Right cardiac atrium (tissue), 5 donors: ENCODE measurements at regions of chr1 and their contacts with region 1.

Region 1: DNA sequence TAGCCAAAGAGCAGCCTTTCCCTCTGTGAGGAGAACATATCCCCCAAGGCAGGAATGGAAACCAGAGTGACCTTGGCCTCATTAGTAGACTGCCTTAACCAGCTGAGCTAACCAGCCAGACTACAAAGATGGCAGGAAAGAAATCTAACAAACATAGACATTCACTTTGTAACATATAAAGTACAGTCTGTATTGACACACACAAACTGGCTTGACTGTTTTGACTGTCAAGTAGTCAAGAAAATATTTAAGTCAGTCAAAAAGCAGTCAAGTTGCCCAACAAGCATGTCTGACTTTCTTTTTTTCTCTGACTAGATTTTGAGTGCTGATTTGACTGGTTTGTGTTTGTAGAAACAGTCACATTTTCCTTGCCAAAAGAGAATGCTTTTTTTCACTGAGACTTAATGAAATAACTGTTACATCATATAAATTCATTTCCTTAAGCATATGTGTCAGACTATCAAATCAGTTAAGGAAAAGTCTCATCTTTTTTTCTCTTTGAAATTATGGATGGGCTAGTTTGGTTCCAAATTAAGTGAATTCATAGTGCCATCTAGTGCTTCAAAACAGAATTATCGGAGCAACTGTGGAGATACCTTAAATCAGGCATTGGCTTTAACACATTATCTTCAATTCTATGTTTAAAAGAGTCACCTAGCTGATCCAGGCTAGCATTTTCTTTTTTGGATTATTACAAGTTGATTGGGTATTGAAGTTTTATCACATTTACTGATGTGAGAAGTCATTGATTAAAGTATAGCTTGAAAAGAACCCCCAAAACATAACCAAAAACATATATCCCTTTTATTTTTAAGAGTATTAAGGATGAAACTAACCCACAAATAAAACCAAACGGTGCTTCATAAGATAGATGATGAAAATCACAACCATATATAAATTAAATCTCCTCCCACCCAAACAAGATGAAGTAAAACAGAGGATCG is 75.0 kb downstream of the ATP6V1G3 start:
- DNase-seq: no peak
- ATAC-seq: peak; percentile 56 to 57
- H3K4me3 ChIP-seq: no peak overlapping the region
- H3K27ac ChIP-seq: no peak overlapping the region
- H3K4me1 ChIP-seq: no peaks in the 10 kb centered on the region
- H3K27me3 ChIP-seq: no peaks in the 10 kb centered on the region

Region 2: GRCh38 chr1:197541411-197541810 is 924.1 kb before region 1 on chr1:
- intact Hi-C with region 1: no loop called
- DNase-seq: no peak
- ATAC-seq: no peak
- H3K4me3 ChIP-seq: no peak overlapping the region
- H3K27ac ChIP-seq: no peak overlapping the region
- H3K4me1 ChIP-seq: no peaks in the 10 kb centered on the region
- H3K27me3 ChIP-seq: no peaks in the 10 kb centered on the region

Region 3: DNA sequence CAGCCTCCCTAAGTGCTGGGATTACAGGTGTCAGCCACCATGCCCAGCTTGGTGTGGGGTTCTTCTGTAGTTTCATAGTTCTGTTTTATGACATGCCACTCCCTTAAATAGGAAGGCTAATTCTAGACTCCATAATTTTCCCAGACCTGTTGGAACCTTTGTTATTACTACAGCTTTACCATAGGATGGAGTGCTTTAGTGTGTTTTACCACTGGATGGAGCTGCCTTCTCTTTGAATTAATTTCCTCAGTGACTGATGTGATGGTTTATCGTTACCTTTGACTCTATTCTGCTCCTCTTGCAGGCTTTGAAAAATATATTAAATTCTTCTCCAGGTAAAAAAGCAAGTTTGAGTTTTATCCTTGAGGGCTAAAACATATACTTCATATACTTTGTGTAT is 393.3 kb before region 1 on chr1:
- intact Hi-C with region 1: loop called in 1 of 4 experiments (anchors 5 kb)
- DNase-seq: no peak
- ATAC-seq: no peak
- H3K4me3 ChIP-seq: no peak overlapping the region
- H3K27ac ChIP-seq: no peak overlapping the region
- H3K4me1 ChIP-seq: no peaks in the 10 kb centered on the region
- H3K27me3 ChIP-seq: no peaks in the 10 kb centered on the region

Region 4: DNA sequence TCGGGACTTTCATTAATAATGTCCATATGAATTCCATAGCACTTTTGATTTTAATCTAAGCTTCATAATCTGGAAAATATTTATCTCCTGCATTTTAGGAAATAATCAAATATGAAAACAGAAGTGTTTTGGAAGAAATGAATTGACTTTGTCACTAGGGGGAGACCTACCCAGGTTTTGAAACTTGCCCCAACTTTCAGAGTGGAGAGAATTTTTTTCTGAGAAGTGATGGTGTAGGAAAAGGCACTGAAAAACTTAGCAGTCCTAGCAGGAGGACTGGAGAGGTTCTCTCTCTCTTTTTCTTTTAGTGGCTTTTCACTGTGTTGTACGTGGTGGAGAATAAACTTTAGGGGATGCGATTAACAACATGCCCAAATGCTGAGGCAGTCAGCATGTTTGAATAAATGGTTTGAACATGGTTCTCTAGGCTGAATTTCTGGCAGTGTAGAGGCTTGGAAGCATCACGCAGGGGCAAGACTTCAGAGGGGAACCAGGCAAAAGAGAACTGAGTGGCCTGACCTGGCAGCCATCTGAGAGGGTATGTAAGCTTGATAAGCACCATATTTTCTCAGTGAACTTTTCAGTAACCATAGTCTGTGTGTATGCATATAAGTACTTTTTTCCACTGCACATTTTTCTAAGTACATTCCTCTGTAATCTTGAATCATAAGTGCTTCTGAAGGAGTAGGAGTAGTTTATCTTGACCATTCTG is 377.0 kb before region 1 on chr1:
- intact Hi-C with region 1: loop called in 3 of 4 experiments (anchors 5 to 10 kb)
- DNase-seq: no peak
- ATAC-seq: peak; percentile 29 to 50
- H3K4me3 ChIP-seq: no peak overlapping the region
- H3K27ac ChIP-seq: no peak overlapping the region
- H3K4me1 ChIP-seq: peaks cover 3% of the 10 kb centered on the region
- H3K27me3 ChIP-seq: no peaks in the 10 kb centered on the region

Region 5: DNA sequence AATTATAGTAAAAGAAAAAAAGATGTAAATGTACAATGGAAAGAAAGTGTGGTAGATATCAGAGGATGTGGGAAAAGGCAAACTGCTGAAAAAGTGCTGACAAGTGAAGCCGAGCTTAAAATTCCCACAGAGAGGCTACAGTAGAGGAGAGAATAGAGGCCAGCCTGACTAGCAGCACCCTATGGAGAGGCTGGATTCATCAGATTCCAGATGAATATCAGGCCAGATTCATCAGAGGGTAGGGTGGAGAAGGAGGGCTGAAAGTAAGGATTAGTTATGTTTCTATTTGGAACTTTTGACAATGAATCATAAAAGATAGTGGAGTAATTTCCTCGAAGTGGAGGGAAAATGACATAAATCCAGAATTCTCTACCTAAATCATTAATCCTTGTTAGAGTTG is 369.1 kb before region 1 on chr1:
- intact Hi-C with region 1: loop called in 2 of 4 experiments (anchors 5 to 10 kb)
- DNase-seq: no peak
- ATAC-seq: no peak
- H3K4me3 ChIP-seq: no peak overlapping the region
- H3K27ac ChIP-seq: no peak overlapping the region
- H3K4me1 ChIP-seq: no peaks in the 10 kb centered on the region
- H3K27me3 ChIP-seq: no peaks in the 10 kb centered on the region

Region 6: DNA sequence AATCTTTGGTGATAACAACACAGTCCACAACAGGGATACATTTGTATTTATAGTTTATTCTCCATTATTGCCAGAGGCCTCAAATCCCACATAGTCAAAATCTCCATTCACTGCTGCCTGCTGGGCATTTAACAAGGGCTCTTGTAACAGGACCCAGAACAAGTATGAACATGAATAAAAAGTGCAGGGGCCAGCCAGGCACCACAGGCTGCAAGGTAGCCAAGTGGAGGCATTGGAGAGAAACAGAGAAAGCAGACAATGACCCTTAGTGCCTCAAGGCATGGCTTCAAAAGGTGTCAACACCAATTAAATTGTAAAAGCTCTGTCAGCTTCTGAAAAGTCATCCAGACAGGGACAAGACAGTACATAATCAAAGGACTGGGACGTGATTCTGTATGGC is 41.8 kb before region 1 on chr1:
- intact Hi-C with region 1: no loop called
- DNase-seq: no peak
- ATAC-seq: no peak
- H3K4me3 ChIP-seq: no peak overlapping the region
- H3K27ac ChIP-seq: no peak overlapping the region
- H3K4me1 ChIP-seq: no peaks in the 10 kb centered on the region
- H3K27me3 ChIP-seq: no peaks in the 10 kb centered on the region